ENCODE measurements at regions of chr11 and their contacts with region 1.

Region 1: GRCh38 chr11:34051349-34052035 is at the start of gene CAPRIN1:
- DNase-seq: peak; percentile 97 to 98
- H3K4me3 ChIP-seq: peak within 1 kb of the TSS; percentile 94
- H3K4me3 Mint-ChIP-seq: peak within 1 kb of the TSS; percentile 98
- H3K27ac Mint-ChIP-seq: peak within 1 kb of the TSS; percentile 97
- H3K4me1 ChIP-seq: peaks cover 19% of the 10 kb centered on the region
- H3K4me1 Mint-ChIP-seq: peaks cover 14% of the 10 kb centered on the region
- H3K27me3 ChIP-seq: no peaks in the 10 kb centered on the region
- H3K27me3 Mint-ChIP-seq: no peaks in the 10 kb centered on the region
- CTCF ChIP-seq: peak in 1 of 2 experiments; percentile 13
- total RNA-seq, gene CAPRIN1: 217 and 224 TPM in 2 replicates

Region 2: GRCh38 chr11:34037016-34037415 is 14.5 kb before region 1 on chr11:
- CTCF ChIA-PET with region 1: no interaction called
- POLR2A ChIA-PET with region 1: interaction called, 3 read pairs
- intact Hi-C with region 1: loop called (anchors 2 kb)
- DNase-seq: no peak
- H3K4me3 ChIP-seq: no peak overlapping the region
- H3K4me3 Mint-ChIP-seq: no peak overlapping the region
- H3K27ac Mint-ChIP-seq: no peak overlapping the region
- H3K4me1 ChIP-seq: peaks cover 8% of the 10 kb centered on the region
- H3K4me1 Mint-ChIP-seq: peaks cover 8% of the 10 kb centered on the region
- H3K27me3 ChIP-seq: no peaks in the 10 kb centered on the region
- H3K27me3 Mint-ChIP-seq: no peaks in the 10 kb centered on the region
- CTCF ChIP-seq: no peak

Region 3: DNA sequence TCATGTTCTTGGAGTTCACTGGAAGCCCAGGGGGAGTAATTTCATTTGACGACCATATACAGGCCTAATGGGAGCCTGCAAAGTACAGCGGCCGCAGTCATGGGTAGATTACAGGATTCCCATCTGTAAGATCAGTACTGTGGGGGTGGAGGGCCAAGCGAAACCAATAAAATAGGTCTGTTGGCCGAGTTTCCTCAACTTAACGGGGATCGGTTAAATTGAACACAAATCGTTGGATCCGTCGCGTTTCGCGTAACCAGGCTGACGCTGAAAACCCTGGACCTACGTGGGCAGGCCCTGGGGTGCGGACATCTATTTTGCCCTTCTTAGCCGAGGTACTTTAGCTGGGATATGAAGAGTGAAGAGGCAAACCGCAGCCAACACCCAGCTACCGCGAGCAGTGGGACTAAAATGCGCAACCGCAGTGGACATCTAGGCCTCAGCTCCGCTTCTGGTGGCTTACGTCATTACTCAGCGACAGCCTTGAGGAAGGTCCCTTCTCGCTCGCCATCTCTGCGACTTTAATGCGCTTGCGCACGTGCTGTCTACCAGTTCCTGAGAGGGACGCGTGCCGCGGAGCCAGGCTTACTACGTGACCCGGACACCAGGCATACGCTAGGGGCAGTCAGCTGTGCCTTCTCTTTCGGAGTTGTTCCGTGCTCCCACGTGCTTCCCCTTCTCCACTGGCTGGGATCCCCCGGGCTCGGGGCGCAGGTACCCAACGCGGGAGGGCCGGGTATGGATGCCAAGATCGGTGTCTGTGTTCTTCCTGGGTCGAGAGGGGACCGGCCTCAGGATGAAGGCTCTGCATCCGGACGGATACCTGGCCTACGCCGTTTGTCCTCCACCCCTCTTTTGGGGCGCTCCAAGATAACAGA is 53.8 kb after region 1 on chr11 and contains the start of gene NAT10:
- CTCF ChIA-PET with region 1: interaction called, 7 read pairs
- POLR2A ChIA-PET with region 1: interaction called, 14 read pairs
- intact Hi-C with region 1: loop called (anchors 1 kb)
- DNase-seq: peak; percentile 97 to 99
- H3K4me3 ChIP-seq: peak within 1 kb of the TSS; percentile 74
- H3K4me3 Mint-ChIP-seq: peak within 1 kb of the TSS; percentile 94
- H3K27ac Mint-ChIP-seq: peak within 1 kb of the TSS; percentile 95
- H3K4me1 ChIP-seq: peaks cover 9% of the 10 kb centered on the region
- H3K4me1 Mint-ChIP-seq: peaks cover 19% of the 10 kb centered on the region
- H3K27me3 ChIP-seq: no peaks in the 10 kb centered on the region
- H3K27me3 Mint-ChIP-seq: no peaks in the 10 kb centered on the region
- CTCF ChIP-seq: no peak
- total RNA-seq, gene NAT10: 91.4 and 101 TPM in 2 replicates